ENCODE measurements at regions of chr7 and their contacts with region 1.

Region 1: GRCh38 chr7:104983578-104984539 is 30.1 kb upstream of the KMT2E start:
- DNase-seq: peak; percentile 91
- ATAC-seq: peak; percentile 88
- H3K4me3 ChIP-seq: peak overlapping the region; percentile 48 to 87 (median 80)
- H3K4me3 Mint-ChIP-seq: peak overlapping the region; percentile 99
- H3K27ac ChIP-seq: peak overlapping the region in 1 of 2 donors; percentile 96
- H3K27ac Mint-ChIP-seq: peak overlapping the region; percentile 100
- H3K4me1 ChIP-seq: peaks cover 34 to 45% of the 10 kb centered on the region in 2 donors
- H3K4me1 Mint-ChIP-seq: peaks cover 79% of the 10 kb centered on the region
- H3K27me3 ChIP-seq: no peaks in the 10 kb centered on the region
- H3K27me3 Mint-ChIP-seq: no peaks in the 10 kb centered on the region
- CTCF ChIP-seq: peak; percentile 70

Region 2: GRCh38 chr7:104943502-104944343 is 40.1 kb before region 1 on chr7:
- CTCF ChIA-PET with region 1: interaction called, 92 read pairs
- POLR2A ChIA-PET with region 1: interaction called, 13 read pairs
- intact Hi-C with region 1: loop called (anchors 1 kb)
- DNase-seq: peak; percentile 73
- ATAC-seq: peak; percentile 18
- H3K4me3 ChIP-seq: peak overlapping the region; percentile 68 to 83 (median 76)
- H3K4me3 Mint-ChIP-seq: peak overlapping the region; percentile 93
- H3K27ac ChIP-seq: peak overlapping the region; percentile 99
- H3K27ac Mint-ChIP-seq: peak overlapping the region; percentile 100
- H3K4me1 ChIP-seq: peaks cover 66 to 78% of the 10 kb centered on the region in 2 donors
- H3K4me1 Mint-ChIP-seq: peaks cover 70% of the 10 kb centered on the region
- H3K27me3 ChIP-seq: no peaks in the 10 kb centered on the region
- H3K27me3 Mint-ChIP-seq: no peaks in the 10 kb centered on the region
- CTCF ChIP-seq: no peak

Region 3: GRCh38 chr7:104971290-104972071 is 12.4 kb before region 1 on chr7:
- CTCF ChIA-PET with region 1: interaction called, 17 read pairs
- POLR2A ChIA-PET with region 1: no interaction called
- intact Hi-C with region 1: no loop called
- DNase-seq: no peak
- ATAC-seq: no peak
- H3K4me3 ChIP-seq: no peak overlapping the region
- H3K4me3 Mint-ChIP-seq: no peak overlapping the region
- H3K27ac ChIP-seq: no peak overlapping the region
- H3K27ac Mint-ChIP-seq: no peak overlapping the region
- H3K4me1 ChIP-seq: peaks cover 14% of the 10 kb centered on the region in 2 donors
- H3K4me1 Mint-ChIP-seq: peaks cover 34% of the 10 kb centered on the region
- H3K27me3 ChIP-seq: no peaks in the 10 kb centered on the region
- H3K27me3 Mint-ChIP-seq: no peaks in the 10 kb centered on the region
- CTCF ChIP-seq: no peak

Region 4: GRCh38 chr7:105013221-105013815 is 29.5 kb after region 1 on chr7:
- CTCF ChIA-PET with region 1: interaction called, 282 read pairs
- POLR2A ChIA-PET with region 1: interaction called, 101 read pairs
- intact Hi-C with region 1: loop called (anchors 1 kb)
- DNase-seq: peak; percentile 95
- ATAC-seq: peak; percentile 57
- H3K4me3 ChIP-seq: peak overlapping the region; percentile 95 to 99 (median 97)
- H3K4me3 Mint-ChIP-seq: peak overlapping the region; percentile 99
- H3K27ac ChIP-seq: peak overlapping the region; percentile 100
- H3K27ac Mint-ChIP-seq: peak overlapping the region; percentile 100
- H3K4me1 ChIP-seq: peaks cover 33 to 52% of the 10 kb centered on the region in 2 donors
- H3K4me1 Mint-ChIP-seq: peaks cover 56% of the 10 kb centered on the region
- H3K27me3 ChIP-seq: no peaks in the 10 kb centered on the region
- H3K27me3 Mint-ChIP-seq: no peaks in the 10 kb centered on the region
- CTCF ChIP-seq: peak; percentile 59

Region 5: DNA sequence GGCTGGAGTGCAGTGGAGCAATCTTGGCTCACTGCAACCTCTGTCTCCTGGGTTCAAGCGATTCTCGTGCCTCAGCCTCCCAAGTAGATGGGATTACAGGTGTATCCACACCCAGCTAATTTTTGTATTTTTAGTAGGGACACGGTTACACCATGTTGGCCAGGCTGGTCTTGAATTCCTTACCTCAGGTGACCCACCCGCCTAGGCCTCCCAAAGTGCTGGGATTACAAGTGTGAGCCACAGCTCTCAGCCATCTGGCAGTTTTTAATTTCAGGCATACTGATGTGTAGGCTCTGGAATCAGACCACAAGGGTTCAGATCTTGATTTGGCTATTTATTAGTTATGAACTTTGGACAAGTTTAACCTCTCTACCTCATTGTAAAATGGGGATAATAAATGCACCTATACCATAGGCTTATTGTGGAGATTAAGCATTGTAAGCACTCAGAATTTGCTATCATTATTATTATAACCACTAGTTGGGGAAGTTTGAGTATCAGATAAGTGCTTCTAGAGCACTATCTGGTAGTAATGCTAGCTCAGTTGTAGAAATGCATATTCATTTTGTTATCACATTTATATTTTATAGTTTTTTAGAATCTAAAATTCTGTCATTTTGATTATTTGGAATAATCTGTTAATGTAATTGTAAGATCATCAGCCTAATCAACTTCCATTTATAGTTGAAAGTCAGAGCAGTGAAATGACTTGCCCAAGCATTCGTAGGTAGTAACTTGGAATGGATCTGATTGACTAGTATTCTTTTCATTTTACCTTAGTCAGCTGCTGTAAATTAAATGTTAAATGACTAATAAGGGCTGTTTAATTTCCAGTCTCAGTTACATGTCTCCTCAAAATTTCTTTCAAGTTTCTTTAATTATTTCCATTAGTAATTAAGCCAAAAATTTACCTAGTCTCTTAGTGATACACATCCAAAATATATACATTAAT is 52.6 kb after region 1 on chr7:
- CTCF ChIA-PET with region 1: interaction called, 151 read pairs
- POLR2A ChIA-PET with region 1: interaction called, 4 read pairs
- intact Hi-C with region 1: loop called (anchors 1 kb)
- DNase-seq: no peak
- ATAC-seq: no peak
- H3K4me3 ChIP-seq: no peak overlapping the region
- H3K4me3 Mint-ChIP-seq: no peak overlapping the region
- H3K27ac ChIP-seq: peak overlapping the region in 1 of 2 donors; percentile 58
- H3K27ac Mint-ChIP-seq: peak overlapping the region; percentile 22
- H3K4me1 ChIP-seq: peaks cover 27 to 36% of the 10 kb centered on the region in 2 donors
- H3K4me1 Mint-ChIP-seq: peaks cover 47% of the 10 kb centered on the region
- H3K27me3 ChIP-seq: no peaks in the 10 kb centered on the region
- H3K27me3 Mint-ChIP-seq: no peaks in the 10 kb centered on the region
- CTCF ChIP-seq: no peak

Region 6: DNA sequence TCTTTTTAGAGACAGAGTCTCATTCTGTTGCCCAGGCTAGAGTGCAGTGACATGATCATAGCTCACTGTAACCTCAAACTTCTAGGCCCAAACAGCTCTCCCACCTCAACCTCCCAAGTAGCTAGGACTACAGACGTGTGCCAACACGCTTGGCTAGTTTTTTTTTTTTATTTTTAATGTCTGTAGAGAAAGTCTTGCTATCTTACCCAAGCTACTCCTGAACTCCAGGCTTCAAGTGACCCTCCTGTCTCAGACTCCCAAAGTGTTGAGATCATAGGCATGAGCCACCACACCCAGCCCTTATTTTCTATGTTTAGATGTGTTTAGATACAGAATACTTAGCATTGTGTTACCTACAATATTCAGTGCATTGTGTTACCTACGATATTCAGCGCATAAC is 76.6 kb after region 1 on chr7:
- CTCF ChIA-PET with region 1: interaction called, 31 read pairs
- POLR2A ChIA-PET with region 1: no interaction called
- intact Hi-C with region 1: no loop called
- DNase-seq: no peak
- ATAC-seq: no peak
- H3K4me3 ChIP-seq: no peak overlapping the region
- H3K4me3 Mint-ChIP-seq: no peak overlapping the region
- H3K27ac ChIP-seq: peak overlapping the region in 1 of 2 donors; percentile 39
- H3K27ac Mint-ChIP-seq: no peak overlapping the region
- H3K4me1 ChIP-seq: no peaks in the 10 kb centered on the region
- H3K4me1 Mint-ChIP-seq: peaks cover 49% of the 10 kb centered on the region
- H3K27me3 ChIP-seq: no peaks in the 10 kb centered on the region
- H3K27me3 Mint-ChIP-seq: no peaks in the 10 kb centered on the region
- CTCF ChIP-seq: no peak

Region 7: GRCh38 chr7:105325216-105325904 is 341.5 kb after region 1 on chr7:
- CTCF ChIA-PET with region 1: no interaction called
- POLR2A ChIA-PET with region 1: no interaction called
- intact Hi-C with region 1: no loop called
- DNase-seq: peak; percentile 42
- ATAC-seq: peak; percentile 78
- H3K4me3 ChIP-seq: no peak overlapping the region
- H3K4me3 Mint-ChIP-seq: peak overlapping the region; percentile 6
- H3K27ac ChIP-seq: peak overlapping the region in 1 of 2 donors; percentile 7
- H3K27ac Mint-ChIP-seq: peak overlapping the region; percentile 51
- H3K4me1 ChIP-seq: peaks cover 10 to 12% of the 10 kb centered on the region in 2 donors
- H3K4me1 Mint-ChIP-seq: peaks cover 52% of the 10 kb centered on the region
- H3K27me3 ChIP-seq: no peaks in the 10 kb centered on the region
- H3K27me3 Mint-ChIP-seq: no peaks in the 10 kb centered on the region
- CTCF ChIP-seq: no peak